ENCODE measurements at regions of chr5 and their contacts with region 1.

Region 1: DNA sequence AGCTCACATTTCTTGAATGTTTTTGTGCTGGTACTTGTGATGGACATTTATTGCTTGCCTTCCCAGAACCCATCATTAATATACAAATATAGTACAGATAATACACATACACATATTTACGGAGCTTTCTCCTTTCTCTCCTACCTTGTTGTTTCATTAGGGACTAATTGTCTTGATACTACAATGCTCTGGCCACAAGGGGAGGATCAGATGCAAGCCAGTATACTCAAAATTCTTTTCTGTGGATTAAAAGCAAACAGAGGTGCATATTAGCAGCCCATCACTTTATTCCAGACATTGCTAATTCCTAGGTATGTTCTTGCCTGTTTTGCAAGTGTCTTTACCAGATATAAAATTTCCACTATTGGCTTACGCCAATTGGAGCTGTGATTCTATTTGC is 807.0 kb downstream of the CDH18 start:
- DNase-seq: no peak
- H3K4me3 ChIP-seq: no peak overlapping the region
- H3K27ac ChIP-seq: no peak overlapping the region
- H3K4me1 ChIP-seq: no peaks in the 10 kb centered on the region
- H3K27me3 ChIP-seq: no peaks in the 10 kb centered on the region
- CTCF ChIP-seq: peak in 1 of 2 donors; percentile 34

Region 2: DNA sequence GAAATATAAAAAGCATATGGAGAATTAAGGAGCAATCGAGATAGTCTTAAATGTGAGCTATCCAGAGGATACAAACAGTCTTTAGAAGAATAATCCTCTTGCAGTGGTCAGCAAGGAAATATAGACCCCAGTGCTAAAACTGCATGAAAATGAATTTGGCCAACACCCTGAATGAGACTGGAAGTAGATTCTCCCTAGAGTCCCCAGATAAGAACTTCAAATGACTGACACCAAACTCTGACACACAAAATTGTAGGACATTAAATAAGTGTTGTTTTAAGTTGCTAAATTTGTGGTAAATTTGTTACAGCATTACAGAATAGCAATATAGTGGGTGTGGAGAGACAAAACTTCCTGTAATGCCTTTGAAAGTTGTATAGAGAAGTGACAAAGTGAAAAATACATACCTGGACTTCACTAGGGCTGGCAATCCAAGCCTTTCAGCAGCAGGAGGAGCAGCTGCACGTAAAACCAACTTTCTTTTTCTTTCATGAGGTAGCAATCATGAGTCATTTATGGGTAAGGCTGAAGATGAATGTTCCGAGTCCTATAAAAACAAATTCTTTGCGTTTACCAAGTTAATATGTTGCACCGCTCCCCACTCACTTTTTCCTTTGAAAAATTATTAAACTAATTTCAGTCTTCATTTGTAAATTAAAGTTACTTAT is 408.7 kb before region 1 on chr5:
- CTCF ChIA-PET with region 1: no interaction called
- dilution Hi-C with region 1: no loop called
- in situ Hi-C with region 1: no loop called
- intact Hi-C with region 1: loop called (anchors 5 kb)
- DNase-seq: peak; percentile 76
- H3K4me3 ChIP-seq: peak overlapping the region in 2 of 3 experiments; percentile 6 to 42
- H3K27ac ChIP-seq: peak overlapping the region; percentile 71
- H3K4me1 ChIP-seq: peaks cover 3% of the 10 kb centered on the region
- H3K27me3 ChIP-seq: no peaks in the 10 kb centered on the region
- CTCF ChIP-seq: peak; percentile 58 to 81

Measured in mammary epithelial cell (primary cell).